Naive thymus-derived CD8-positive, alpha-beta T cell (primary cell): ENCODE measurements at regions of chr12 and their contacts with region 1.

Region 1: GRCh38 chr12:6965026-6965661 is 5.3 kb downstream of the PHB2 start:
- DNase-seq: peak; percentile 77 to 93 (median 86)
- ATAC-seq: peak; percentile 46 to 61
- H3K4me3 Mint-ChIP-seq: peak overlapping the region in 4 of 10 donors; percentile 15 to 48 (median 30)
- H3K27ac Mint-ChIP-seq: peak overlapping the region; percentile 79 to 95 (median 90)
- H3K4me1 Mint-ChIP-seq: peaks cover 31 to 64% (median 62%) of the 10 kb centered on the region in 4 donors
- H3K27me3 Mint-ChIP-seq: no peaks in the 10 kb centered on the region

Region 2: DNA sequence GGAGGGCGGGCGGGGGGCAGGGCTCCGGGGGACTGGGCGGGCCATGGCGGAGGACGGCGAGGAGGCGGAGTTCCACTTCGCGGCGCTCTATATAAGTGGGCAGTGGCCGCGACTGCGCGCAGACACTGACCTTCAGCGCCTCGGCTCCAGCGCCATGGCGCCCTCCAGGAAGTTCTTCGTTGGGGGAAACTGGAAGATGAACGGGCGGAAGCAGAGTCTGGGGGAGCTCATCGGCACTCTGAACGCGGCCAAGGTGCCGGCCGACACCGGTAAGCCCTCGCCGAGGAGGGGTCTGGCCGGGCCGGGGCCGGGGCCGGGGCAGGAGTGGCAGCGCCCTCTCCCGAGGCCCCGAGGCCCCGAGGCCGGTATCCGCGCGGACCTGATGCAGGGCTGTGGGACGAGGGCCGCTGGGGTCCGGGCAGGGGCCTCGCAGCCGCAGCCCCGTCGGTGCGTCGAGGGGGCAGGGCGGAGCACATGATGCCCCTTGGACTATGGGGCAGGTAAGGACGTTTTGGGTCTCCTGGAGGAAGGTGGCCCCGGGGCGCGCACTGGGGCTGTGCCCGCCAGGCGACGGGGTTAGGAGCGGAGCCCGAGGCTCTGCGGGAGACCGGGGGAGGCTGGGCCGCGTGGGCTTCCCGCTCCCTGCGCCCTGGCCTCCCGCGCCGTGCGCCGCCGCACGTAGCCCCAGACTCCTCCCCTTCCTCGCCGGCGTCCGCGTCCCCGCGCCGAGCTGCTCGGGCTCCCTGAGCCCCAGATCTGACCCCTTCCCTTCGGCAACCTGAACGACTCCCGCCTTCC is 97.5 kb before region 1 on chr12 and contains the start of gene TPI1:
- POLR2A ChIA-PET with region 1: interaction called, 43 read pairs
- DNase-seq: peak in 9 of 10 donors; percentile 38 to 87 (median 60)
- ATAC-seq: peak; percentile 70 to 72
- H3K4me3 Mint-ChIP-seq: peak within 1 kb of the TSS; percentile 84 to 95 (median 88)
- H3K27ac Mint-ChIP-seq: peak within 1 kb of the TSS; percentile 84 to 96 (median 89)
- H3K4me1 Mint-ChIP-seq: peaks cover 33 to 62% (median 52%) of the 10 kb centered on the region in 4 donors
- H3K27me3 Mint-ChIP-seq: no peaks in the 10 kb centered on the region
- polyA plus RNA-seq, gene TPI1: 372 to 497 (median 479) TPM

Region 3: DNA sequence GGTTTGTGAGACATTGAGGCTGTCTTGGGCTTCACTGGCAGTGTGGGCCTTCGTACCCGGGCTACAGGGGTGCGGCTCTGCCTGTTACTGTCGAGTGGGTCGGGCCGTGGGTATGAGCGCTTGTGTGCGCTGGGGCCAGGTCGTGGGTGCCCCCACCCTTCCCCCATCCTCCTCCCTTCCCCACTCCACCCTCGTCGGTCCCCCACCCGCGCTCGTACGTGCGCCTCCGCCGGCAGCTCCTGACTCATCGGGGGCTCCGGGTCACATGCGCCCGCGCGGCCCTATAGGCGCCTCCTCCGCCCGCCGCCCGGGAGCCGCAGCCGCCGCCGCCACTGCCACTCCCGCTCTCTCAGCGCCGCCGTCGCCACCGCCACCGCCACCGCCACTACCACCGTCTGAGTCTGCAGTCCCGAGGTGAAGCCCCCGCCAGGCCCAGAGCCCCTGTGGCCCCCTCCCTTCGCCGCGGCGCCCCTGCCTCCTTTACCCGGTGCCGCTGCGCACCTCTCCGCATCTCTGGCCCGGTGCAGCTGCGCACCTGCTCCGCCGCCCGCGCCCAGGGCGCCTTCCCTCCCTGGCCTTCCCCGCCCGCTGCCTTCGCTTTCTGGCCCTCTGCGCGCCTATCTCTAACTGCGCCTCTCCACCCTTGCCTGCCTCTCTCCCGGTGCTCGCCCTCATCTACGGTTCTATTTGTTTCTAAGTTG is 50.7 kb before region 1 on chr12 and contains the start of gene ENO2:
- POLR2A ChIA-PET with region 1: interaction called, 17 read pairs
- DNase-seq: peak; percentile 77 to 93 (median 82)
- ATAC-seq: peak; percentile 89 to 92
- H3K4me3 Mint-ChIP-seq: peak within 1 kb of the TSS; percentile 91 to 97 (median 94)
- H3K27ac Mint-ChIP-seq: peak within 1 kb of the TSS; percentile 87 to 98 (median 95)
- H3K4me1 Mint-ChIP-seq: peaks cover 16 to 52% (median 27%) of the 10 kb centered on the region in 4 donors
- H3K27me3 Mint-ChIP-seq: no peaks in the 10 kb centered on the region
- polyA plus RNA-seq, gene ENO2: 19.4 to 29.2 (median 19.7) TPM

Region 4: DNA sequence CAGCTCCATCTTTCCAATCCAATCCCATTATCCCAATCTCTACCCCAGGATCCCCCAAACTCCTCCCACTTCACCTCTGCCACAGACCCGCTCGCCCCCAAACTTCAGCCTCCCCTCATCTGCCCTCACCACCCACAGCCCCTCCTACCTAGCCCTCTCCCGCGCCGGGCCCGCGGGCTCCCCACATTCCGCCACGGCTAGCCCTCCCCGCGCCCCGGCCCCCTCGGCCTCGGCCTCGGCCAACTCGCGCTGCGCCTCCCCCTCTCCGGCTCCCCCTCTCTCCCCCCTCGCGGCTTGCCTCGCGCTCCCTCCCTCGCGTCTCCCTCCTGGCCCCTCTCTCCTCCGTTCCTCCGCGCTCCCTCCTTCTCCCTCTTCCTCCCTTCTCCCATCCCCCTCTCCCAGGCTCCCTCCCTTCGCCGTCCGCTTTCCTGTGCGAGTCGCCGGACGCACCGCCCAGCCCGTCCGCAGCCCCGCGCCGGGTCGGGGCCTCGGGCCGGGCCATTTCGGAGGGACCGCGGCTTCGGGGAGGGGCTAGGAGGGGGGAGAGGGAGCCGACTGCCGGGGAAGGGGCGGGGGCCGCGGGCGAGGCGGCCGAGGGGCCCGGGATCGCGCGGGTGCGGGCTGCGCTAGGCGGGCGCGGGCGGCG is 37.6 kb before region 1 on chr12 and contains the start of gene ATN1:
- POLR2A ChIA-PET with region 1: interaction called, 53 read pairs
- DNase-seq: peak in 5 of 10 donors; percentile 37 to 47 (median 43)
- ATAC-seq: peak; percentile 18 to 41
- H3K4me3 Mint-ChIP-seq: peak within 1 kb of the TSS; percentile 82 to 94 (median 90)
- H3K27ac Mint-ChIP-seq: peak within 1 kb of the TSS; percentile 91 to 96 (median 92)
- H3K4me1 Mint-ChIP-seq: peaks cover 35 to 60% (median 51%) of the 10 kb centered on the region in 4 donors
- H3K27me3 Mint-ChIP-seq: no peaks in the 10 kb centered on the region
- polyA plus RNA-seq, gene ATN1: 0.35 to 1.4 (median 1.1) TPM

Region 5: DNA sequence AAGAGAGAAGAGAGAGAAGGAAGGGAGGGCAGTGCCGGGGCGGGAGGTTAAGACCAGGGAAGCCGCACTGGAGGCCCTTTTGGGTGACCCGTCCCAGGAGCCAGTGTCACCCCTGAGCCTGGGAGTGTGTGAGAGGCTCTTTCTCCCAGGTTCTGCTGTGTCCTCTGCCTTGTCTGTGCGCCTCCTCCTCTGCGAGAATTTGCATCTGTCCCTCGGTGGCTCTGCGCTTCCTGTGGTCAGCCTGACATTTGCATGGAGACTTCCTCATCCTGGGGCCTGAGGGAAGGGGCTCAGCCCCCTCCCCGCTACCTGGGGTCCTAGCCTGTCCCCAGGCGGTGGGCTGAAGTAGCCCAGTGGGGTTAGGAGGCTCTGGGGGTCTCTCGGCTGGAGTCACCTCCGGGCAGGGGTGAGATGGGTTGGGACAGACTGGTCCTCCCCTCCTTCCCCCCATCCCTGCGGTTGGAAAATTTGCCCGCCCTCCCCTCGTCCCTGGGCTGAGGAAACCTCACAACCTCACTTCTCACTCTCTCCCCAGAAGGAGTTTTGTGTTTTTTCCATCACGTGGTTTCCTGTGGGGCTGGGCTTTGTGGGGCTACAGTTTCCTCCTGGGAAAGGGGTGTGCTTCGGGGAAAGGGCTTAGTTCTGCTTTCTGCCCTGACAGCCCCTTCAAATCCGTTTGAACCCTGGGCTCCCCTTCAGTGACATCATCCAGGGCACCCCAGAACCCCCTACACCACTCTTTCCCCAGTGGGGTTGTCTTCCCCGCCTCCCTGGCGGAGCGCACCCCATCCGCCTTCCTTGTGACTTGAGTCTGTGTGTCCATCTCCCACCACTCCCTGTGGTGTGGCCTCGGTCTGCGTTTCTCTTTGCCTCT is 11.5 kb before region 1 on chr12:
- POLR2A ChIA-PET with region 1: interaction called, 1,315 read pairs
- DNase-seq: peak; percentile 55 to 88 (median 79)
- ATAC-seq: peak; percentile 38 to 45
- H3K4me3 Mint-ChIP-seq: peak overlapping the region; percentile 98 to 100 (median 98)
- H3K27ac Mint-ChIP-seq: peak overlapping the region; percentile 93 to 99 (median 98)
- H3K4me1 Mint-ChIP-seq: peaks cover 50 to 93% (median 80%) of the 10 kb centered on the region in 4 donors
- H3K27me3 Mint-ChIP-seq: no peaks in the 10 kb centered on the region